Sigmoid colon (tissue), 7 donors: ENCODE measurements at regions of chr19 and their contacts with region 1.

Region 1: GRCh38 chr19:31600731-31601295 is 251.6 kb upstream of the TSHZ3 start:
- DNase-seq: no peak
- H3K4me3 ChIP-seq: no peak overlapping the region
- H3K27ac ChIP-seq: no peak overlapping the region
- H3K4me1 ChIP-seq: no peaks in the 10 kb centered on the region
- H3K27me3 ChIP-seq: no peaks in the 10 kb centered on the region
- CTCF ChIP-seq: no peak
- EP300 ChIP-seq: no peak
- POLR2A ChIP-seq: no peak

Region 2: GRCh38 chr19:30204721-30205120 is 1396.1 kb before region 1 on chr19:
- intact Hi-C with region 1: loop called (anchors 10 kb)
- DNase-seq: no peak
- H3K4me3 ChIP-seq: no peak overlapping the region
- H3K27ac ChIP-seq: no peak overlapping the region
- H3K4me1 ChIP-seq: no peaks in the 10 kb centered on the region
- H3K27me3 ChIP-seq: no peaks in the 10 kb centered on the region
- CTCF ChIP-seq: no peak
- EP300 ChIP-seq: no peak
- POLR2A ChIP-seq: no peak